GM23248 (cell line): ENCODE measurements at regions of chr2 and their contacts with region 1.

Region 1: GRCh38 chr2:164717000-164717803 is 95.9 kb upstream of the GRB14 start:
- DNase-seq: peak; percentile 68
- H3K4me3 ChIP-seq: no peak overlapping the region
- H3K27ac ChIP-seq: no peak overlapping the region
- H3K4me1 ChIP-seq: peaks cover 22% of the 10 kb centered on the region
- H3K27me3 ChIP-seq: no peaks in the 10 kb centered on the region

Region 2: DNA sequence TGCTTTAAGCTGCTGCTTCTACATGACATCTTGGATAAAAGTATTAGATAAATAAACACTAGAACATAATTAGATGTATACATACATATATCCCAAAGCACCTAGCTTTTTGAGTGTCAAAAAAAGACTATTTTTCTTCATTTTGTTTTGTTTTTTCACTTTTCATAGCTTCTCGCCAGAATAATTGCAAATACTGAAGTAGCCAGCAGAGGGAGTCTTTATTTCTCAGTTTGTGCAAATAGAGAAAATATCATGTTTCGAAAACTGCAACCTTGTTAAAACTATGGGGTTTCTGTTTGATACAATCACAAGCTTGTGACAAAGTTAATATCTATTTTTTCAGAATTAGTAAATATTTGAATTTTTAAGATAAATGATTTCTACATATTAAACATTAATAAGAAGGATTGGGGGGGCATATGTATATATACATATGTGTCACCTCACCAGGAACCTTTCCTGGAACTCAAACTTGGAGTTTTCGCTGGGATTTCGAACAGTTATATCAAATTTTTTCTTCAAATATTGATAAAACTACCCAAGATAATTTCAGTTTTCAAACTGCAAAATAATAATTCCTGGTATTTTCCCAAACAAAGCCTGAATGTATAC is 156.9 kb before region 1 on chr2:
- in situ Hi-C with region 1: loop called (anchors 10 kb)
- DNase-seq: peak; percentile 57
- H3K4me3 ChIP-seq: no peak overlapping the region
- H3K27ac ChIP-seq: no peak overlapping the region
- H3K4me1 ChIP-seq: no peaks in the 10 kb centered on the region
- H3K27me3 ChIP-seq: peaks cover 11% of the 10 kb centered on the region; the same call in 1 of the 2 replicates